ENCODE measurements at regions of chr11 and their contacts with region 1.

Region 1: DNA sequence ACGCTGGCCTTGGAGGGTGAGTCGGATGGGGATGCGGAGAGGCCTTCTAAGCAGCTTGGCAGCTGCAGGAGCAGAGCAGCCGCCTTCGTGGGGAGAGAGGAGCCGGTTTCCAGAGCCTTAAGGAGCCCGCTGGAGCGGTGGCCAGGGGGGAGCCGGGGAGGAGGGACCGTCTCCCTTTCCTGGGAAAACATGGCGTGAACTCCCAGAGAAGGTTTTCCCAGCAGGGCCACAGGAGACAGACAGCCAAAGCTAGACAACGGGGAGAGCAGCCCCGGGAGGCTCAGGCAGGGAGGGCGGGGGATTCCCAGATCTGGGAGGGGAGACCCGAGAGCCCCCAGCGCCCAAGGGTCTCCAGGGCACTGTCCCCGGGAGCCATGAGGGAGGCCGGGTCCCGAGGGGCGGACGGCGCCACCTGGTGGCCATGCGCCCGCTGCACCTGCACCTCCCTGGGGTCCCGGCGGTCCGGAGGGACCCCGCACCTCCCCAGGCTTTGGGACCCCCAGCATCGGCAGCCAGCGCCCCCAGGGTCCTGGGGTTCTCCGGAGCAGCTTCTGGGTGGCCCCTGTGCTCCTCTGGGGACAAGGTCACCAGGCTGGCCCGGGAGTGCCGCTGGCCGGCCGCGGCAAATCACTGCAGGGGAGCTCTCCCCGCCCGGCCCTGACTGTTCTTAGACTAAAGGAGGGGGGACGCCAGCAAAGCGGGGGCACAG is 2.4 kb upstream of the SYT8 start:
- DNase-seq: peak; percentile 39 to 76
- ATAC-seq: peak; percentile 15

Region 2: GRCh38 chr11:1652771-1653540 is 179.4 kb before region 1 on chr11:
- intact Hi-C with region 1: loop called in 1 of 2 experiments (anchors 5 kb)
- DNase-seq: peak in 1 of 2 donors; percentile 72
- ATAC-seq: peak; percentile 86

Region 3: DNA sequence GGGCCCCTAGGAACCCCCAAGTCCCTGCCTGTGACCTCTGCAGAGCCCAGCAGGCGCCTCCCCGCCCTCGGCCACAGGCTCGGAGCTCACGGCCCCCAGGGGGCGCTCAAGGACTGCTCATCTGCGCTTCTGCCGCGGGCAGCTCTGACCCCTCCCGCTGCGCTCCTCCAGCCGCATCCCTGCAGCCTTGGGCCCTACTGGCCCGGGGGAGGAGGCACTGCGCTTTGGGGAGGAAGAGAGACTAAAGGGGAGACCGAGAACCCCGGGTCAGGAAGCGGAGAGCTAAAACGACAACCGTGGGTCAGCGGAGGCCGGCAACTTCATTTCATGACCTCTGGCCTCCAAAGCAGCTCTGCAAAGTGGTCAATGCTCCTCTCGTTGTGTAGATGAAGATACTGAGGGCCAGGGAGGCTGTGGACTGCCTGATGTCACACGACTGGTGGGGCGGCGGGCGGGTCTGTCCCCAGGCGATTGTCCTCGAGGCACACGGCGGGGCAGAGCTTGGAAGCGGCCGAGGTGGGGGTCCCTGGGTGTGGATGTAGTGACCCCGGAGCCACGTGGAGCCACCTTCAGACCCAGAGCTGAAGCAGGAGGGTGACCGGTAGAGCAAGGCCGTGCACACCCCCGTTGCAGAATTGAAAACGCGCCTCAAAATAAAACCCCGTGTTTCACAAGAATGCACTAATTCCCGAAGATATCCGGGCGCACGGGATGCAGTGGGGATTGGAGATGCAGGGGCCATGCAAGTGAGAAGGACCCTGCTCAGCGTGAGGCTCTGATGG is 138.1 kb before region 1 on chr11:
- intact Hi-C with region 1: loop called (anchors 2 to 5 kb)
- DNase-seq: peak; percentile 78 to 96
- ATAC-seq: peak; percentile 94

Measured in left colon (tissue), 2 donors.